ENCODE measurements at regions of chr19 and their contacts with region 1.

Region 1: GRCh38 chr19:39328046-39328705 is 7.5 kb upstream of the LRFN1 start:
- DNase-seq: peak; percentile 22
- ATAC-seq: peak; percentile 49; the same call in 1 of the 3 replicates
- H3K4me3 ChIP-seq: no peak overlapping the region
- H3K27ac ChIP-seq: no peak overlapping the region
- H3K4me1 ChIP-seq: peaks cover 36% of the 10 kb centered on the region
- H3K27me3 ChIP-seq: no peaks in the 10 kb centered on the region
- CTCF ChIP-seq: peak; percentile 91
- EP300 ChIP-seq: no peak
- POLR2A ChIP-seq: no peak
- RAD21 ChIP-seq: peak; percentile 77; the same call in 1 of the 2 replicates

Region 2: DNA sequence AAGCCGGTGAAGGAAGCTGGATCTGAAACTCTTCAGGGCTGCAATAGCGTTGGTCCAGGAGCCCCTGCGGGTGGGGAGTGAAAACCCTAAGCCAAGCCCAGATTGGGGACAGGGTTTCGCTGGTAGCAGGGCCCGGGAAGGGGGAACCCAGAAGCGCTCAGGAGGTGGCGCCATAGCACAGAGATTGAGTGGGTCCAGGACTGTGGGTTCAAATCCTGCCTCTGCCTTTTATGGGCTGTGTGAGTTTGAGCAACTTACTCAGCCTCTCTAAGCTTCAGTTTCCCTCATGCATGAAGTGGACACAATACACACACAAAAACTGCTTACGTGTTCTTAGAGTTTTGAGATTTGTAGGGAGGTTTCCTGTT is 115.8 kb before region 1 on chr19:
- CTCF ChIA-PET with region 1: interaction called, 5 read pairs
- POLR2A ChIA-PET with region 1: no interaction called
- in situ Hi-C with region 1: loop called (anchors 5 kb)
- intact Hi-C with region 1: loop called (anchors 5 kb)
- DNase-seq: no peak
- ATAC-seq: peak; percentile 73
- H3K4me3 ChIP-seq: no peak overlapping the region
- H3K27ac ChIP-seq: no peak overlapping the region
- H3K4me1 ChIP-seq: no peaks in the 10 kb centered on the region
- H3K27me3 ChIP-seq: no peaks in the 10 kb centered on the region; a peak in 2 of 5 replicates
- CTCF ChIP-seq: peak; percentile 60
- EP300 ChIP-seq: no peak
- POLR2A ChIP-seq: no peak
- RAD21 ChIP-seq: peak; percentile 66

Measured in HepG2 (cell line).